ENCODE measurements at regions of chr14 and their contacts with region 1.

Region 1: GRCh38 chr14:50231475-50232275 is at the start of gene SOS2:
- DNase-seq: peak; percentile 52 to 94
- H3K4me3 ChIP-seq: peak within 1 kb of the TSS; percentile 88 to 93
- H3K27ac ChIP-seq: peak within 1 kb of the TSS; percentile 90 to 99
- H3K4me1 ChIP-seq: peaks cover 5 to 21% of the 10 kb centered on the region in 2 donors
- H3K27me3 ChIP-seq: no peaks in the 10 kb centered on the region
- CTCF ChIP-seq: peak in 1 of 3 experiments; percentile 9
- total RNA-seq, gene SOS2: 7.3 TPM

Region 2: GRCh38 chr14:49633640-49634546 is 597.8 kb before region 1 on chr14:
- intact Hi-C with region 1: loop called (anchors 5 kb)
- DNase-seq: peak; percentile 72 to 96
- H3K4me3 ChIP-seq: peak overlapping the region; percentile 54 to 79
- H3K27ac ChIP-seq: peak overlapping the region; percentile 93 to 96
- H3K4me1 ChIP-seq: peaks cover 0 to 7% of the 10 kb centered on the region in 2 donors
- H3K27me3 ChIP-seq: no peaks in the 10 kb centered on the region
- CTCF ChIP-seq: peak; percentile 73 to 95 (median 76)

Region 3: GRCh38 chr14:49767562-49768300 is 463.9 kb before region 1 on chr14 and contains the start of gene KLHDC2:
- intact Hi-C with region 1: loop called (anchors 5 kb)
- DNase-seq: peak; percentile 50 to 93
- H3K4me3 ChIP-seq: peak within 1 kb of the TSS; percentile 83 to 94
- H3K27ac ChIP-seq: peak within 1 kb of the TSS; percentile 94 to 97
- H3K4me1 ChIP-seq: peaks cover 0 to 24% of the 10 kb centered on the region in 2 donors
- H3K27me3 ChIP-seq: no peaks in the 10 kb centered on the region
- CTCF ChIP-seq: peak in 2 of 3 experiments; percentile 21 to 29
- total RNA-seq, gene KLHDC2: 11.7 TPM

Region 4: DNA sequence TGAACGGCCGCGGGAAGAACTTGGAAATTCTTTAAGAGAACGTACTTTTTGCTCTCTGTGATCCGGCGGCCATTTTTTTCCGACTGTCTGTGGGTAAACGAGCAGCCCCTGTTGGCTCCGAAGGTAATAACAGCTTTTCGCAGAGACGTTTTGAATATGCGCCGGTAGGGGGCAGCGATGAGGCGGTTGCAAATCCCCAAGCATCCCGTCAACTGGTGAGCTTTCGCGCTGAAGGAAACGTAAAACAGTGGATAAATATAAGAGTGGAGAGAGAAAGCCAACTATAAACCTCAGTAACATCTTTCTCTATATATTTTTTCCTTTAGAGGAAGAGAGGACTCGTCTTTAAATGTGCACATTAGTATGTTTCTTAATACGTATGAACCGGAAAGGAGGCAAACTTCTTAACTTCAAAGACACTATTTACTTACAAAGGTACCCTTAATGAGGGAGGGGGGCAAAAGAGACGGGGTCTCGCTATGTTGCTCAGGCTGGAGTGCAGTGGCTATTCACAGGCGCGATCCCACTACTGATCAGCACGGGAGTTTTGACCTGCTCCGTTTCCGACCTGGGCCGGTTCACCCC is 369.5 kb before region 1 on chr14:
- intact Hi-C with region 1: loop called (anchors 2 kb)
- DNase-seq: peak; percentile 44 to 95
- H3K4me3 ChIP-seq: peak overlapping the region; percentile 65 to 77
- H3K27ac ChIP-seq: peak overlapping the region; percentile 98 to 99
- H3K4me1 ChIP-seq: peaks cover 3 to 11% of the 10 kb centered on the region in 2 donors
- H3K27me3 ChIP-seq: no peaks in the 10 kb centered on the region
- CTCF ChIP-seq: peak; percentile 100

Region 5: GRCh38 chr14:50023671-50024490 is 207.8 kb before region 1 on chr14:
- intact Hi-C with region 1: no loop called
- DNase-seq: peak in 1 of 2 donors; percentile 74
- H3K4me3 ChIP-seq: peak overlapping the region in 1 of 2 donors; percentile 9
- H3K27ac ChIP-seq: peak overlapping the region; percentile 70 to 78
- H3K4me1 ChIP-seq: peaks cover 7 to 35% of the 10 kb centered on the region in 2 donors
- H3K27me3 ChIP-seq: no peaks in the 10 kb centered on the region
- CTCF ChIP-seq: no peak

Region 6: GRCh38 chr14:50311975-50312733 is 80.5 kb after region 1 on chr14 and contains the starts of genes DMAC2L and L2HGDH:
- intact Hi-C with region 1: loop called (anchors 2 kb)
- DNase-seq: peak; percentile 71 to 95
- H3K4me3 ChIP-seq: peak within 1 kb of the TSS; percentile 67 to 90
- H3K27ac ChIP-seq: peak within 1 kb of the TSS; percentile 89 to 92
- H3K4me1 ChIP-seq: peaks cover 0 to 8% of the 10 kb centered on the region in 2 donors
- H3K27me3 ChIP-seq: no peaks in the 10 kb centered on the region
- CTCF ChIP-seq: no peak
- total RNA-seq, gene DMAC2L: 13.5 TPM
- total RNA-seq, gene L2HGDH: 1.5 TPM

Region 7: GRCh38 chr14:50667996-50668825 is 436.5 kb after region 1 on chr14 and contains the start of gene SAV1:
- intact Hi-C with region 1: loop called (anchors 5 kb)
- DNase-seq: peak in 1 of 2 donors; percentile 89
- H3K4me3 ChIP-seq: peak within 1 kb of the TSS; percentile 86 to 96
- H3K27ac ChIP-seq: peak within 1 kb of the TSS; percentile 99
- H3K4me1 ChIP-seq: peaks cover 4 to 15% of the 10 kb centered on the region in 2 donors
- H3K27me3 ChIP-seq: no peaks in the 10 kb centered on the region
- CTCF ChIP-seq: no peak
- total RNA-seq, gene SAV1: 61.7 TPM

Region 8: GRCh38 chr14:51239813-51240803 is 1008.4 kb after region 1 on chr14 and contains the start of gene TMX1:
- intact Hi-C with region 1: loop called (anchors 5 kb)
- DNase-seq: peak; percentile 92 to 98
- H3K4me3 ChIP-seq: peak within 1 kb of the TSS; percentile 93 to 96
- H3K27ac ChIP-seq: peak within 1 kb of the TSS; percentile 84 to 88
- H3K4me1 ChIP-seq: peaks cover 0 to 5% of the 10 kb centered on the region in 2 donors
- H3K27me3 ChIP-seq: no peaks in the 10 kb centered on the region
- CTCF ChIP-seq: no peak
- total RNA-seq, gene TMX1: 5.1 TPM

Measured in ascending aorta (tissue), 2 donors.